Gastrocnemius medialis (tissue), 4 donors: ENCODE measurements at regions of chr2 and their contacts with region 1.

Region 1: DNA sequence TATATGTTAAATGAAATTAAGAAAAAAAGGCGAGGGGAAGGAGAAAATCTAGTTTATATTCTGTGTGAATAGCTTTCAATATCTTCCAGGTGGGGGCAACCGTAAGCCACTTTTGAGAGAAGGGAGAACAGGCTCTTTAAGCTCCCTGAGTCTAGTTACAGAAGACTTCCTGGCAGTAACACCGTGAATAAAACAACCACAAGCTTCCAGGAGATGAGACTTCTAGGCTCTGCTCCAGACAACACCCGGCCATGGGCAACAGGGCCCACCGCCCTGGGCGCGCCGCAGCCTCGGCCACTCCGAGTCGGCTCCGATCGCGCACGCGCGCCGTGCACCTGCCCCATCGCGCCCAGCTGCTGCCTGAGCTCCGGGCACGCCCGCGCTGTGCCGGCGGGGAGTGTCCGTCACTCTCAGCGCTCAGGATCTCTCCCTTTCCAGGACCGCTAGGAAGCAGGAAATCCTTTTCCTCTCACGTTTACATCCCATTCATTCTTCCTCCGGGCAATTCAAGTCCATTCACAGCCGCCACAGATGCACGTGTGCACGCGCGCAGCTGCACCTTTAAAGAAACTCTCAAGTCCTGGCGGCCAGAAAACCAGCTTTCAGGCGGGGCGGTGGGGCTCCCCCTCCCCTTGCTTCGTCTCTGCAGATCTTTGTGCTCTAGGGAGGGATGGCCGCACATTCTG is 19.4 kb upstream of the PAX3 start:
- DNase-seq: peak in 1 of 2 donors; percentile 48
- ATAC-seq: peak; percentile 70 to 82
- H3K4me3 ChIP-seq: peak overlapping the region; percentile 51 to 57 (median 54)
- H3K27ac ChIP-seq: peak overlapping the region in 2 of 4 donors; percentile 50 to 58
- H3K4me1 ChIP-seq: peaks cover 0 to 8% of the 10 kb centered on the region in 2 donors
- H3K27me3 ChIP-seq: peaks cover 18 to 28% (median 20%) of the 10 kb centered on the region in 3 donors
- CTCF ChIP-seq: peak in 4 of 5 experiments; percentile 20 to 43 (median 33)
- POLR2A ChIP-seq: no peak

Region 2: DNA sequence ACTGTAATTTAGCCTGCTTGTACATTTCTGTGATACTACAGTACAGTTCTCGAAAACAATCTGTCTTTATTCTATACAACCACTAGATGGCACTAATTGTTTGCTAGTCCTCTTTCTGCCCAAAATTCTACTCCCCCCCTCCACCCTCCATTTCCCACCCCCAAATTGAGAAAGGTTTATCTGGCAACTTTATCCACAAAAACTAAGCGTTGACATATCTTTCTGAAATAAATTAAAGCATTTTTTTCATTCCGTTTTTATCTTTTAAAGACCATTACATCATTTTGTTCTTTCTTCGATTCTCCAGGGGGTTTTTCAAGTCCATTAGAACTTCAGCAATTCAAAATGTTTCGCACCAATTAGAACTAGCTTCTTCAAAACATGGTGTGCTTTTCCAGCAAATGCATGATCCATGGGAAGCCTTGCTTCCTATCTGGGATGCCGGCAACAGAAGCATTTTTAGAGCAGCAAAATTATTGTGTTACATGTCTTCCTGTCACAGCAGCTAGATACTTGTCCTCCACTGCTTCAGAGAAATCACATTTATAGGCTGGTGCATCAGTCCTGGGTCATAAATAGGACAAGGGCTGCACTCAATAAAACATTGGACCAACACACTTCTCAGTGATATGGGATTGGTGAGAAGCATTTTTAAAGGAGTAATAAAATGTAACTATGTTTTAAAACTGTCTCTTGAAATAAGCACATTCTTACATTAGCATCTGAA is 260.7 kb before region 1 on chr2:
- in situ Hi-C with region 1: loop called in 1 of 4 experiments (anchors 25 kb)
- intact Hi-C with region 1: no loop called
- DNase-seq: no peak
- ATAC-seq: no peak
- H3K4me3 ChIP-seq: no peak overlapping the region
- H3K27ac ChIP-seq: no peak overlapping the region
- H3K4me1 ChIP-seq: no peaks in the 10 kb centered on the region
- H3K27me3 ChIP-seq: peaks cover 0 to 11% (median 3%) of the 10 kb centered on the region in 3 donors
- CTCF ChIP-seq: peak; percentile 33 to 69 (median 44)
- POLR2A ChIP-seq: no peak

Region 3: DNA sequence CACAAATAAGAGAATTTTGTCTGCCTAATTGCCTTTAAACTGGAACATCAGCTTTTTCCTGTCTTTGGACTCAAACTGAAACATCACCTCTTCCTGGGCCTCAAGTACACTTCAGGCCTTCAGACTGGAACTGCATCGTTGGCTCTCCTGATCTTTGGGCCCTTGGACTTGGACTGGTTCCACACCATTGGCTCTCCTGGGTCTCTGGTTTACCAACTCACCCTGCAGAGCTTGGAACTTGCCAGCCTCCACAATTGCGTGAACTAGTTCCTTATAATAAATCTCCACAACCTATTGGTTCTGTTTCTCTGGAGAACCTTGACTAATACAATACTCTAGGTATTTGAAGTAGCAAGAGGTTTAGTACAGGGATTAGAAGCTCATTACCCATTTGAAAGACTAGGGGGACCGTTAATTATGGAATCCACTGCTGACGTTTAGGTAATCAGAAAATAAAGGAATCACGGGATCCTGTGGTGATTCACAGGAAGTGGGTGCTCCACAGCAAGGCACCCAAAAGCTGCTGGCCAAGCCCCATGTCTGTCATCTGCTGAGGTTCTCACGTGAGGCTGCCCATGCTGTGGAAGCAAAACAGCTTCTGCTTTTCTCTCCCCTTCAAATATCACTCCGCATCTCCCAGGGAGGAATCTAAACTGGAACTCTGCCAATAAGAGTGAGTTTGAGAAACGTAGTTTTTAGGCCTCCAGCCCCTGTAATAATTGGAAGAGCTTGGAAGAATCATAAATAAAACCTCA is 86.2 kb after region 1 on chr2:
- in situ Hi-C with region 1: no loop called
- intact Hi-C with region 1: loop called (anchors 10 kb)
- DNase-seq: peak in 1 of 2 donors; percentile 37
- ATAC-seq: no peak
- H3K4me3 ChIP-seq: no peak overlapping the region
- H3K27ac ChIP-seq: no peak overlapping the region
- H3K4me1 ChIP-seq: peaks cover 0 to 6% of the 10 kb centered on the region in 2 donors
- H3K27me3 ChIP-seq: no peaks in the 10 kb centered on the region
- CTCF ChIP-seq: no peak
- POLR2A ChIP-seq: no peak

Region 4: GRCh38 chr2:222561817-222562645 is 243.9 kb after region 1 on chr2:
- in situ Hi-C with region 1: loop called in 3 of 4 experiments (anchors 10 to 25 kb)
- intact Hi-C with region 1: loop called (anchors 1 kb)
- DNase-seq: no peak
- ATAC-seq: peak in 1 of 2 donors; percentile 50
- H3K4me3 ChIP-seq: no peak overlapping the region
- H3K27ac ChIP-seq: no peak overlapping the region
- H3K4me1 ChIP-seq: no peaks in the 10 kb centered on the region
- H3K27me3 ChIP-seq: peaks cover 0 to 5% (median 0%) of the 10 kb centered on the region in 3 donors
- CTCF ChIP-seq: peak in 4 of 5 experiments; percentile 22 to 60 (median 45)
- POLR2A ChIP-seq: no peak

Region 5: GRCh38 chr2:222613715-222614331 is 295.7 kb after region 1 on chr2:
- in situ Hi-C with region 1: no loop called
- intact Hi-C with region 1: loop called (anchors 2 kb)
- DNase-seq: no peak
- ATAC-seq: peak; percentile 36 to 46
- H3K4me3 ChIP-seq: no peak overlapping the region
- H3K27ac ChIP-seq: no peak overlapping the region
- H3K4me1 ChIP-seq: no peaks in the 10 kb centered on the region
- H3K27me3 ChIP-seq: no peaks in the 10 kb centered on the region
- CTCF ChIP-seq: peak; percentile 33 to 68 (median 62)
- POLR2A ChIP-seq: no peak